Heart right ventricle (tissue), 16 donors: ENCODE measurements at regions of chr6 and their contacts with region 1.

Region 1: DNA sequence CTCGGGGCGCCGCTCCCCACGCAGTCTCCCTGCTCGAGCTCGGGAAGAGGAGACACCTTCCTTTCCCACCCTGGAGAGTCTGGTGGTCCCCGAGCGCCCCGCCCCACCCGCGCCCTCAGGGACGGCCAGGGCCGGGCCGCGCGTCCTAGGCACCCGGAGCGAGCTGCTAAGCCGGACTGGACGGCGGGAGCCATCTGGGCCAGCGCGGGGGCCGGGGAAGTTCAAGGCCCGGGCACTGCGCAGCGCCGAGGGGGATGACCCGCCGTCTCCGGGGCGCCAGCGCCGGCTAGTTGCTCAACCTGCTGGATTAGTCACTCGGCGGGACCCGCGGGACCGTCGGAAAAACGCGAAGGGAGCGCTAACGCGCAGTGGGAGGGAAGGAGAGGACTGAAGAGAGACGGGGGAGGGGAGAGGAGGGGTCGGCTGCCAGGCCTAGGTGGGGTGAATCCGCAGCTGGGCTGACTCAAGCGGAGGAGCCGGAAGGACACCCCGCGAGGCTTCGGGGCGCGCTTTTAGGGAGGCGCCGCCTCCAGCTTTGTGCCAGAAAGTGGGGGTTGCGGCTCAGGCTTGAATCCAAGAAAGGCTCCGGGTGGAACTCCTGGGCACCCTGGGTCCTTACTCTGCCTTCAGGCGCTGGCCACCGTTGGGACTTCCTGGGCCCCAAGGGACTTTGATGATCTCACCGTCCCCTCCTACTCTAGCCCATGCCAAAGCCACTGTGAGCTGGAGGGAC is 75.7 kb upstream of the FOXP4 start:
- DNase-seq: peak in 1 of 2 donors; percentile 59
- ATAC-seq: peak; percentile 23 to 86 (median 48)
- H3K4me3 ChIP-seq: peak overlapping the region in 4 of 10 donors; percentile 3 to 24 (median 9)
- H3K27ac ChIP-seq: no peak overlapping the region
- H3K4me1 ChIP-seq: peaks cover 0 to 15% (median 4%) of the 10 kb centered on the region in 9 donors
- H3K27me3 ChIP-seq: peaks cover 8 to 62% (median 38%) of the 10 kb centered on the region in 7 donors
- CTCF ChIP-seq: no peak

Region 2: DNA sequence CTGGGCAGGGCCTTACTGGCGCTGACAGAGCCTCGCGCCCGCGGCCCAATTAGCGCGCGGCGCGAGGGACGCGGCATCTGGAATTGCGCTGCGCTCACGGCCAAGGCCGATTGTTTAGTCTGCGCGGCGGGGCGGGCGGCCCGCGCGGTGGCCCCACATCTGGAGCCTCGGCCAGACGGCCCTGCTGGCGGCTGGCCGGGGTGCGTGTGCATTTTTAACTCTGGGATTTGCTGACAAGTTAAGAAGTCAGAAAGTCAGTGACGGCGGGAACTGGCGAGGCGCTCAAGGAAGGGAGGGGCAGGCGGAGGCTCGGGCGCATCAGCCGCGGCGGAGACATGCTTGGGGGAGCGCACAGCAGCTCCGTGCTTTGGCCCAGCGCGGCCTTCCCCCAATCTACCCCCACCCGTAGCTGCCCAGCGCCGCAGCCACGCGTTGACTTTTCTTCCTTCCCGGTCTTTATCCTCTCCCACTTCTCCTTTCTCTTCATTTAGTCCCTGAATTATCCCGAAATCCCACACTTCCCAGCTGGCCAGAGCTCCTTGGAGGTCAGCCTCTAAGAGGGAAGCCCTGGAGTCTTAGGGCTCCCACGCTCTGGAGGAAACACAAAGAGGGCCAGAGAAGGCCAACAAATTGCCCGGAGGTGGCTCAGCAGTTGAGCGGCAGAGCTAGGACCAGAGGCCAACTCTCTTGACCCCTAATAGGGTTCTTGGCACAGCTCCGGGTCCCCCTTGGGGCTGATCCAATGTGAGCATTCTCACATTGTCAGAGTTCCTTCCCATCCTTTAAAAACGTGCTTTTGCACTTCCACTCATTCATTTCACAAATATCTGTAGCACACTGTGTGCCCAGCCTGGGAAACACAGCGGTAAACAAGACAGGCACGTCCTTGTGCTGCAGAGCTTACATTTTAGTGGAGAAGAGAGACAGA is 34.9 kb after region 1 on chr6:
- intact Hi-C with region 1: loop called in 1 of 10 experiments (anchors 2 kb)
- DNase-seq: peak; percentile 77
- ATAC-seq: peak; percentile 75 to 84 (median 80)
- H3K4me3 ChIP-seq: peak overlapping the region in 9 of 10 donors; percentile 24 to 54 (median 44)
- H3K27ac ChIP-seq: peak overlapping the region in 9 of 10 donors; percentile 39 to 81 (median 71)
- H3K4me1 ChIP-seq: peaks cover 5 to 34% (median 20%) of the 10 kb centered on the region in 9 donors
- H3K27me3 ChIP-seq: peaks cover 0 to 80% (median 56%) of the 10 kb centered on the region in 7 donors
- CTCF ChIP-seq: no peak